ENCODE measurements at regions of chr12 and their contacts with region 1.

Region 1: GRCh38 chr12:98172304-98172703 is 343.1 kb upstream of the TMPO start:
- DNase-seq: no peak
- H3K4me3 Mint-ChIP-seq: no peak overlapping the region
- H3K27ac Mint-ChIP-seq: no peak overlapping the region
- H3K4me1 Mint-ChIP-seq: no peaks in the 10 kb centered on the region
- H3K27me3 Mint-ChIP-seq: peaks cover 19% of the 10 kb centered on the region
- CTCF ChIP-seq: no peak

Region 2: GRCh38 chr12:97921979-97922722 is 250.2 kb before region 1 on chr12:
- CTCF ChIA-PET with region 1: interaction called, 10 read pairs
- intact Hi-C with region 1: no loop called
- DNase-seq: no peak
- H3K4me3 Mint-ChIP-seq: no peak overlapping the region
- H3K27ac Mint-ChIP-seq: peak overlapping the region; percentile 29
- H3K4me1 Mint-ChIP-seq: peaks cover 14% of the 10 kb centered on the region
- H3K27me3 Mint-ChIP-seq: no peaks in the 10 kb centered on the region
- CTCF ChIP-seq: no peak

Measured in Calu3 (cell line).